B cell (primary cell): ENCODE measurements at regions of chr19 and their contacts with region 1.

Region 1: GRCh38 chr19:44447916-44448674 is at the start of gene ZNF229:
- DNase-seq: peak; percentile 88
- ATAC-seq: peak; percentile 99
- H3K4me3 ChIP-seq: peak within 1 kb of the TSS; percentile 24 to 69 (median 68)
- H3K4me3 Mint-ChIP-seq: peak within 1 kb of the TSS; percentile 94
- H3K27ac ChIP-seq: no peak within 1 kb of the TSS
- H3K27ac Mint-ChIP-seq: peak within 1 kb of the TSS; percentile 71
- H3K4me1 ChIP-seq: peaks cover 8 to 9% of the 10 kb centered on the region in 2 donors
- H3K4me1 Mint-ChIP-seq: peaks cover 15% of the 10 kb centered on the region
- H3K27me3 ChIP-seq: peaks cover 0 to 13% (median 1%) of the 10 kb centered on the region in 4 experiments
- H3K27me3 Mint-ChIP-seq: peaks cover 19% of the 10 kb centered on the region
- CTCF ChIP-seq: no peak
- total RNA-seq, gene ZNF229: 6.2 and 6.7 TPM in 2 replicates

Region 2: DNA sequence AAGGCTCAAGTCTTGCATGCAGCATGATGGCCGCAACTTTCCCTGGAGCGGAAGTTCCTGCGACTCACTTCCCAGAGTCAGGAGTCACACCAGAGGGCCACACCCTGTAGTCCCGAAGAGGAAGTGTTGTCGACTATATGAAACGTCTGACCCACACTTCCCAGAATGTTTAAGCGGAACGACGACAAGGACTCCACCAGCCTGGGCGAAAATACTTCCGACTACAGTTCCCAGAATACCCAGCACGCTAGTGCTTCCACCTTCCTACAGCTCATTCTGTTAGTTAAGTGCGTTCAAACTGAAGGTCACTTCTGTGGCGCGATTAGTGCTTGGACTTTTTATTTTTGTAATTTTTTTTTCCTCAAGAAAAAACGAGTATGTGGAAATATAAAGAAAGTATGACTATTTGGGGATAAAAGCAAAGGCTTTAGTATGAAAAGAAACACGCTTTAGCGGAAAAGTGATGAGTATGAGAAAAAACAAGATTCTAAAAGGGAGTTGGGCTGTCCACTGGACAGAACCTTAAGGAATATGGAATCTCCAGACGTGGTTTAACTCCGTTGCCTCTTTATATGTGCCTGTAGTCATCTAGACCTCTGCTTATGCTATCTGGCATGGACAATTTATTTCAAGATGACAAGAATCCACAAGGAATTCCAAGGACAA is 76.1 kb before region 1 on chr19:
- CTCF ChIA-PET with region 1: no interaction called
- POLR2A ChIA-PET with region 1: no interaction called
- intact Hi-C with region 1: no loop called
- DNase-seq: no peak
- ATAC-seq: no peak
- H3K4me3 ChIP-seq: no peak overlapping the region
- H3K4me3 Mint-ChIP-seq: no peak overlapping the region
- H3K27ac ChIP-seq: no peak overlapping the region
- H3K27ac Mint-ChIP-seq: no peak overlapping the region
- H3K4me1 ChIP-seq: no peaks in the 10 kb centered on the region
- H3K4me1 Mint-ChIP-seq: no peaks in the 10 kb centered on the region
- H3K27me3 ChIP-seq: peaks cover 0 to 3% (median 0%) of the 10 kb centered on the region in 4 experiments
- H3K27me3 Mint-ChIP-seq: peaks cover 16% of the 10 kb centered on the region
- CTCF ChIP-seq: no peak

Region 3: GRCh38 chr19:44401139-44402115 is 46.7 kb before region 1 on chr19 and contains the start of gene ZNF285:
- CTCF ChIA-PET with region 1: no interaction called
- POLR2A ChIA-PET with region 1: no interaction called
- intact Hi-C with region 1: loop called (anchors 1 kb)
- DNase-seq: peak; percentile 89
- ATAC-seq: peak; percentile 99
- H3K4me3 ChIP-seq: peak within 1 kb of the TSS; percentile 59 to 77 (median 73)
- H3K4me3 Mint-ChIP-seq: peak within 1 kb of the TSS; percentile 96
- H3K27ac ChIP-seq: no peak within 1 kb of the TSS
- H3K27ac Mint-ChIP-seq: peak within 1 kb of the TSS; percentile 72
- H3K4me1 ChIP-seq: peaks cover 0 to 13% of the 10 kb centered on the region in 2 donors
- H3K4me1 Mint-ChIP-seq: peaks cover 10% of the 10 kb centered on the region
- H3K27me3 ChIP-seq: peaks cover 0 to 4% (median 1%) of the 10 kb centered on the region in 4 experiments
- H3K27me3 Mint-ChIP-seq: peaks cover 5% of the 10 kb centered on the region
- CTCF ChIP-seq: no peak
- total RNA-seq, gene ZNF285: 7.6 and 7.9 TPM in 2 replicates

Region 4: GRCh38 chr19:44500148-44500956 is 52.3 kb after region 1 on chr19 and contains the start of gene ZNF180:
- CTCF ChIA-PET with region 1: no interaction called
- POLR2A ChIA-PET with region 1: no interaction called
- intact Hi-C with region 1: loop called (anchors 1 kb)
- DNase-seq: peak; percentile 98
- ATAC-seq: peak; percentile 93
- H3K4me3 ChIP-seq: peak within 1 kb of the TSS; percentile 70 to 99 (median 93)
- H3K4me3 Mint-ChIP-seq: peak within 1 kb of the TSS; percentile 99
- H3K27ac ChIP-seq: peak within 1 kb of the TSS; percentile 52 to 84
- H3K27ac Mint-ChIP-seq: peak within 1 kb of the TSS; percentile 92
- H3K4me1 ChIP-seq: peaks cover 13 to 25% of the 10 kb centered on the region in 2 donors
- H3K4me1 Mint-ChIP-seq: peaks cover 29% of the 10 kb centered on the region
- H3K27me3 ChIP-seq: peaks cover 0 to 5% (median 2%) of the 10 kb centered on the region in 4 experiments
- H3K27me3 Mint-ChIP-seq: peaks cover 14% of the 10 kb centered on the region
- CTCF ChIP-seq: peak; percentile 56
- total RNA-seq, gene ZNF180: 16.1 and 19.6 TPM in 2 replicates

Region 5: DNA sequence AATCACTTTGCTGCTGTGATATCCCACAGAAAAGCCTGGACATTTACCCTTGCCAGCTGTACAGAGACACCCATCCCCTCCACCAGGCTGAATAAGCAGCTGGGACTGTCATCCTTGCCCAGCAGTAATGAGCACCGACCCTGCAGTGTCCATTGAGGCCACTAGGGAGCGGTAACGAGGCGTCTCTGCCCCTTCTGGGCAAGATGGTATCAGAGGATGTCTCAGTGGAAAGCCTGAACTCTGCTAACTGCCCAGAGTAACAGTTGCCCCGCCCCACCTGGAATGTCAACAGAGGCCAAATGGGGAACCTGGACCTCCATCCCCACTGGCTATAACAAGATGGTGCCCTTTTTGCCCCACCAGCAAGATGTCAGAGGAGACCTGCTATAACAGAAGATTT is 104.2 kb after region 1 on chr19:
- CTCF ChIA-PET with region 1: no interaction called
- POLR2A ChIA-PET with region 1: no interaction called
- intact Hi-C with region 1: no loop called
- DNase-seq: peak; percentile 23
- ATAC-seq: no peak
- H3K4me3 ChIP-seq: no peak overlapping the region
- H3K4me3 Mint-ChIP-seq: no peak overlapping the region
- H3K27ac ChIP-seq: no peak overlapping the region
- H3K27ac Mint-ChIP-seq: no peak overlapping the region
- H3K4me1 ChIP-seq: no peaks in the 10 kb centered on the region
- H3K4me1 Mint-ChIP-seq: no peaks in the 10 kb centered on the region
- H3K27me3 ChIP-seq: peaks cover 0 to 5% (median 0%) of the 10 kb centered on the region in 4 experiments
- H3K27me3 Mint-ChIP-seq: peaks cover 24% of the 10 kb centered on the region
- CTCF ChIP-seq: no peak

Region 6: DNA sequence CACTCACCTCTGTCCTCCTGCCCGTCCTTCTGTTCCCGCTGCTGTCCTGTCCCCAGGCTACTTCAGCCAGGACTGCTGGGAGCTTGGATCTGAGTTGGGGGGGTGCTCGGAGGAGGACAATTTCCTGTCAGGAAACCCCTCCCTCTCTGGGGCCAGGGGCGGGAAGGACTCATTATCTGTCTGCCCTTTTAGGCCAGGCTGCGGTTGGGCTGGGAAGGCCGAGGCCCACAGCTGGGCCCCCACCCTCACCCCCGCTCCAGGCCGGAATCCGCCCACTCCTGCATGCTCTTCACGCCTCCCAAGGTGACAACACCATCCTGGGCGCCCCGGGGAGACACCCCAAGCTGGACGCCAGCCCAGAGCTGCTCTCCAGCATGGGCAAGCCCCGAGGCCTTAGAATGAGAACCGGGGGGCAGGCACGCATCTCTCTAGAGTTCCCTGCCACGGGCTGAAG is 797.3 kb after region 1 on chr19 and contains the start of gene EXOC3L2:
- CTCF ChIA-PET with region 1: no interaction called
- POLR2A ChIA-PET with region 1: no interaction called
- intact Hi-C with region 1: no loop called
- DNase-seq: no peak
- ATAC-seq: no peak
- H3K4me3 ChIP-seq: no peak within 1 kb of the TSS
- H3K4me3 Mint-ChIP-seq: no peak within 1 kb of the TSS
- H3K27ac ChIP-seq: no peak within 1 kb of the TSS
- H3K27ac Mint-ChIP-seq: no peak within 1 kb of the TSS
- H3K4me1 ChIP-seq: peaks cover under 1 to 9% of the 10 kb centered on the region in 2 donors
- H3K4me1 Mint-ChIP-seq: peaks cover 5% of the 10 kb centered on the region
- H3K27me3 ChIP-seq: no peaks in the 10 kb centered on the region
- H3K27me3 Mint-ChIP-seq: peaks cover 11% of the 10 kb centered on the region
- CTCF ChIP-seq: no peak
- total RNA-seq, gene EXOC3L2: not detected in 2 replicates